Posterior cingulate gyrus (tissue), 11 donors: ENCODE measurements at regions of chrX and their contacts with region 1.

Region 1: GRCh38 chrX:12974796-12975669 is at the start of gene TMSB4X:
- DNase-seq: peak; percentile 82 to 98 (median 88)

Region 2: GRCh38 chrX:13013363-13014110 is 38.5 kb after region 1 on chrX:
- intact Hi-C with region 1: no loop called
- DNase-seq: no peak

Region 3: GRCh38 chrX:13092455-13092941 is 117.5 kb after region 1 on chrX:
- intact Hi-C with region 1: loop called (anchors 10 kb)
- DNase-seq: peak in 2 of 10 donors; percentile 8 to 83

Region 4: GRCh38 chrX:13487731-13488523 is 512.9 kb after region 1 on chrX:
- intact Hi-C with region 1: loop called (anchors 1 kb)
- DNase-seq: peak in 3 of 10 donors; percentile 18 to 76 (median 19)

Region 5: DNA sequence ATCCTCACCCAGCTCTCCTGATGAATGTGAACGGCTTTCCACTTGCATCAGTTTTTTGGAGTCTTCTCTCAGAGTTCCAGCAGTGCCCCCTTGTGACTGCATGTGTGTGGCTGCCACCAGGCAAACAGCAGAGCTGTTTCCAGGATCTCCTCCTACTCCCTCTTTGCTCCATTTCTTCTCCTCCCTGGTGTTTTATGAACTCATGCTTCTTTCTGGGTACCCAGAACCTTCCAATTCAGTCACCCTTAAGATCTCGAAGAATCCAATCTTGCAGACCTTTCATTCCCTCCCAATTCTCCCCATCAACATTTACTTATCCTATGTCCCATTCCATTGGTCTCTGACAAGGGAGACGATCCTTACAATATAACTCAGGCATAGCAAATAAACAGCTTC is 671.1 kb after region 1 on chrX:
- intact Hi-C with region 1: loop called (anchors 5 kb)
- DNase-seq: peak in 8 of 10 donors; percentile 18 to 94 (median 50)